Activated CD4-positive, alpha-beta memory T cell treated with anti-CD3 and anti-CD28 coated beads for 36 hours (primary cell): ENCODE measurements at regions of chr1 and their contacts with region 1.

Region 1: DNA sequence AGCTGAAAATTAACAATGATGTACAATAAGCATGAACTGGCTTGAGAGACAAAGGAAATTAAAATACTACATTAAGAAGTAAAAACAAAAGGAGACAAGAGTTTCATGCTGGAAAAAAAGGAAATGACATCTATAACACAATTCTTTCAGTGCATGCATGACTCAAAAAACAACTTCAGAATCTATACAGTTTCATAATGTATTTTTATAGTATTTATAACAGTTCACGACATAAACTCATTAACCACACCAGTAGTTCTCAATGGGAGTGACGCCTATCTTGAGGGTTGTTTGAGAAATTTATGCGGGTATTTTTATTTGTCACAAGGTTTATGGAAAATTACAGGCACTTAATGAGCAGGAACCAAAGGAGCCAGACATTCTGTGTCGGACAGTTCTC is 168.5 kb downstream of the SMYD3 start:
- DNase-seq: no peak
- H3K4me3 Mint-ChIP-seq: no peak overlapping the region
- H3K27ac Mint-ChIP-seq: peak overlapping the region; percentile 60
- H3K4me1 Mint-ChIP-seq: peaks cover 31% of the 10 kb centered on the region
- H3K27me3 Mint-ChIP-seq: no peaks in the 10 kb centered on the region

Region 2: GRCh38 chr1:246280551-246280950 is 58.0 kb before region 1 on chr1:
- CTCF ChIA-PET with region 1: no interaction called
- POLR2A ChIA-PET with region 1: no interaction called
- intact Hi-C with region 1: no loop called
- DNase-seq: no peak
- H3K4me3 Mint-ChIP-seq: no peak overlapping the region
- H3K27ac Mint-ChIP-seq: no peak overlapping the region
- H3K4me1 Mint-ChIP-seq: no peaks in the 10 kb centered on the region
- H3K27me3 Mint-ChIP-seq: no peaks in the 10 kb centered on the region

Region 3: GRCh38 chr1:246364415-246364941 is 25.9 kb after region 1 on chr1:
- CTCF ChIA-PET with region 1: no interaction called
- POLR2A ChIA-PET with region 1: interaction called, 5 read pairs
- intact Hi-C with region 1: loop called (anchors 1 kb)
- DNase-seq: peak; percentile 35
- H3K4me3 Mint-ChIP-seq: peak overlapping the region; percentile 49
- H3K27ac Mint-ChIP-seq: peak overlapping the region; percentile 64
- H3K4me1 Mint-ChIP-seq: peaks cover 20% of the 10 kb centered on the region
- H3K27me3 Mint-ChIP-seq: no peaks in the 10 kb centered on the region